ENCODE measurements at regions of chr3 and their contacts with region 1.

Region 1: GRCh38 chr3:17841190-17841828 is 98.9 kb upstream of the TBC1D5 start:
- DNase-seq: peak; percentile 64 to 87 (median 86)
- ATAC-seq: peak; percentile 87 to 90
- H3K4me3 ChIP-seq: no peak overlapping the region
- H3K27ac ChIP-seq: no peak overlapping the region
- H3K4me1 ChIP-seq: no peaks in the 10 kb centered on the region
- H3K27me3 ChIP-seq: no peaks in the 10 kb centered on the region

Region 2: GRCh38 chr3:17258823-17259436 is 582.4 kb before region 1 on chr3:
- intact Hi-C with region 1: loop called in 1 of 4 experiments (anchors 5 kb)
- DNase-seq: no peak
- ATAC-seq: no peak
- H3K4me3 ChIP-seq: no peak overlapping the region
- H3K27ac ChIP-seq: no peak overlapping the region
- H3K4me1 ChIP-seq: no peaks in the 10 kb centered on the region
- H3K27me3 ChIP-seq: no peaks in the 10 kb centered on the region

Region 3: DNA sequence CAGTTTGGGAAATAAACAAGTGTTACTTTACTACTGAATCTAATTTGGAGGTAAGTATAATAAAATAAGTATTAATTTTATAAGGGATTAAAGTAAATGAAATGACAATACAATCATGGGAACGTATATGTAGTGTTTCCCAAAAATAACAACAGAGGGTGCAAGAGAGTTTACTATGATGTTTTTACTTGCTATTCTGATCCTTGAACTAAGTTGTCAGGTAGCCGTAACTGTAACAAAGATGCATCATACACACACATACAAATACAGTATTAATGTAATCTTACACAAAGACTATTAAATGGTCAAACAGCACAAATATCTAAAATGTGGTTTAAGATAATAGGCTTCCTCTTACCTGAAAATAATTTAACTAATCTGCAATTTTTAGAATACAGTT is 410.3 kb before region 1 on chr3:
- intact Hi-C with region 1: loop called (anchors 5 to 10 kb)
- DNase-seq: no peak
- ATAC-seq: peak in 1 of 2 donors; percentile 57
- H3K4me3 ChIP-seq: no peak overlapping the region
- H3K27ac ChIP-seq: no peak overlapping the region
- H3K4me1 ChIP-seq: no peaks in the 10 kb centered on the region
- H3K27me3 ChIP-seq: no peaks in the 10 kb centered on the region

Region 4: DNA sequence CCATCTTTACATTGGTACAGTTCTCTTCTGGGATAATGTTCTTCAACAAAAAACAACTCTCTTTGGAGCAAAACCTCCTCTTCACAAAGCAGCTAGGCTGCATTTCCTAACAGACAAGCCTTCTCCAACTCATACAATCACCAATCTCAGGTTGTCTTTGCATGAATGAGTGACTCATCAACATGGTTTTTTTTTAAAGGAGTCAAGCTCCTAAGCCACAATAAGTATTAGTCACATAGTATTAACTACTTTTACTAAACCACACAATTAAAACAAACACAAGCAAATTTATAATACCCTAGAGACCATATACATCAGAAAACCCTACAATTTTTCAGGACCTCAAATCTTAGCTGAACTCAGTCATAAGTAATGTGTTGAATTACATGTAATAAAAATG is 236.3 kb before region 1 on chr3:
- intact Hi-C with region 1: no loop called
- DNase-seq: no peak
- ATAC-seq: no peak
- H3K4me3 ChIP-seq: no peak overlapping the region
- H3K27ac ChIP-seq: no peak overlapping the region
- H3K4me1 ChIP-seq: no peaks in the 10 kb centered on the region
- H3K27me3 ChIP-seq: no peaks in the 10 kb centered on the region

Region 5: GRCh38 chr3:17645072-17645698 is 196.1 kb before region 1 on chr3:
- intact Hi-C with region 1: loop called in 1 of 4 experiments (anchors 10 kb)
- DNase-seq: no peak
- ATAC-seq: peak; percentile 55 to 65
- H3K4me3 ChIP-seq: no peak overlapping the region
- H3K27ac ChIP-seq: no peak overlapping the region
- H3K4me1 ChIP-seq: no peaks in the 10 kb centered on the region
- H3K27me3 ChIP-seq: no peaks in the 10 kb centered on the region